Pancreas (tissue), 10 donors: ENCODE measurements at regions of chr5 and their contacts with region 1.

Region 1: GRCh38 chr5:38809388-38810359 is 36.1 kb upstream of the OSMR start:
- DNase-seq: peak; percentile 49 to 82 (median 72)
- ATAC-seq: peak; percentile 84 to 98 (median 98)
- H3K4me3 ChIP-seq: no peak overlapping the region
- H3K27ac ChIP-seq: no peak overlapping the region
- H3K4me1 ChIP-seq: no peaks in the 10 kb centered on the region
- H3K27me3 ChIP-seq: no peaks in the 10 kb centered on the region
- CTCF ChIP-seq: peak; percentile 37 to 75 (median 64)

Region 2: GRCh38 chr5:38433160-38433861 is 376.4 kb before region 1 on chr5:
- intact Hi-C with region 1: loop called in 1 of 3 experiments (anchors 10 kb)
- DNase-seq: no peak
- ATAC-seq: peak in 1 of 4 donors; percentile 50
- H3K4me3 ChIP-seq: no peak overlapping the region
- H3K27ac ChIP-seq: no peak overlapping the region
- H3K4me1 ChIP-seq: no peaks in the 10 kb centered on the region
- H3K27me3 ChIP-seq: peaks cover 0 to 3% (median 0%) of the 10 kb centered on the region in 4 donors
- CTCF ChIP-seq: no peak

Region 3: DNA sequence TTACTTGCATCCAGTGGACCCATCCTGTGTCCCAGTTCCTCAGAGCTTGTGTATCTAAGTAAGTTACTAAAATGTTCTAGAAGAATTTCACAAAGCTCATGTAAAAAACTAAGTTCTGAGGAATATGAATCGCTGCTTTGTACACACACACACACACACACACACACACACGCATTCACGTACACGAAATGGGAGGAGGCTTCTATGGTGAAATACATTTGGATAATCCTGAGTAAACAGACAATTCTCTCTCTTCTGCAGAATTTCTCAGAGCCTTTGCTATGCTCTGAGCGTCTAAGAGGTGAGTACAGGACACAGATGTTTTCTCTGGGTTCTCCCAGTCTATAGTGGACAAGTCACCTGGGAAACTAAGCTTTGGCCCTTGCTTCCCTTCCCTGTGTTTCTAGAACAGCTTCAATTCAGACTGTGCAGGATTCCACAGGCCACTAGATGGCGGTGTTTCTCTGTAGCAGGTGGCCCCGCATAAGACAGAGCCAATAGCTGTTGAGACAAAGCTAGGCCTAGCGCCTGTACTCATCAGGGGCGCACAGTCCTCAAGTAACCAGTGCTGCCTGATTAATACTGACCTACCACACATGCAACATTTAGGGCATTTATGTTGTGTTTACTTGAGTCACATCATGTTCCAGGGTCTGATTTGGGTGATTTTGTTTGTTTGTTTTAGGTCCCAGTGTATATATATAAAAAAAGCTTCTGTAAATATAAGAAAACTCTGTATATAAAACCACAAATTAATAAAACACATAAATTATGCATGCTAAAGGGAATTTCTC is 368.0 kb before region 1 on chr5:
- intact Hi-C with region 1: loop called (anchors 5 to 10 kb)
- DNase-seq: peak; percentile 76 to 91 (median 86)
- ATAC-seq: peak; percentile 99 to 100 (median 99)
- H3K4me3 ChIP-seq: no peak overlapping the region
- H3K27ac ChIP-seq: no peak overlapping the region
- H3K4me1 ChIP-seq: no peaks in the 10 kb centered on the region
- H3K27me3 ChIP-seq: no peaks in the 10 kb centered on the region
- CTCF ChIP-seq: peak; percentile 81 to 96 (median 90)

Region 4: DNA sequence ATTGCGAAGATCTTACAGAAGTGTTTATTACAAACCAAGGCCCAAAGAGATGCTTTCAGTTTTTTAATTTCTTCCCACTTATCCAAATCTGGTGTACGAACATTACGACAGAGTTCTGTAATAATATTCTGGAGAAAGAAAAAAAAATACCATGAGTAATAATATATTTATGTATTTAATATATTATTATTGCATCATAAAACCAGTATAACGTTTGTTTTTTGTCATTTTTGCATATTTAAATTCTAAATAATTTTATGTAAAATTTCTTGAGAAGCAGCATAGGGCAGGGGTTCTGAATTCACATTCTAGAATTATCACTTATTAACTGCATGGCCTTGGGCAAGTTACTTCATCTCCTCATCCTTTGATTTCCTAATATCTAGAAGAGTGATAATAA is 143.8 kb after region 1 on chr5:
- intact Hi-C with region 1: no loop called
- DNase-seq: no peak
- ATAC-seq: no peak
- H3K4me3 ChIP-seq: no peak overlapping the region
- H3K27ac ChIP-seq: no peak overlapping the region
- H3K4me1 ChIP-seq: no peaks in the 10 kb centered on the region
- H3K27me3 ChIP-seq: no peaks in the 10 kb centered on the region
- CTCF ChIP-seq: no peak

Region 5: GRCh38 chr5:38979535-38979934 is 169.9 kb after region 1 on chr5:
- intact Hi-C with region 1: no loop called
- DNase-seq: no peak
- ATAC-seq: no peak
- H3K4me3 ChIP-seq: no peak overlapping the region
- H3K27ac ChIP-seq: no peak overlapping the region
- H3K4me1 ChIP-seq: no peaks in the 10 kb centered on the region
- H3K27me3 ChIP-seq: no peaks in the 10 kb centered on the region
- CTCF ChIP-seq: no peak

Region 6: DNA sequence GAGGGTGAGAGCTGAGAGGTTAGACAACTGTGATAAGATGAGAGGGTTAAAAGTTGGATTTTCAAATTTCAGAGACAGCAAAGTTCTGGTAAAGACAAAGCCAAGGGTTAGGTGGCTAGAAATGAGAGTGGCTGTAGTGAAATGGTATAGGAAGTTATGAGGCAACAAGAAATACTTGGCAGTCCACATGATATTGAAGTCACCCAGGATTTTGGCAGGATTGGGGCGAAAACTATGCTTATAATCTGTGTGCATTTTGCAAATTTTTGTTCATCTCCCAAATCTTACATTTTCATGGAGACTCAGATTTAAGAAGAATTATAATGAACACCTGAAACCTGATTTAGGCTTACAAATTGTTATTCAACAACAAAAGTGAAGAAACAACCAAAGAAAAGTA is 519.1 kb after region 1 on chr5:
- intact Hi-C with region 1: no loop called
- DNase-seq: no peak
- ATAC-seq: no peak
- H3K4me3 ChIP-seq: no peak overlapping the region
- H3K27ac ChIP-seq: no peak overlapping the region
- H3K4me1 ChIP-seq: no peaks in the 10 kb centered on the region
- H3K27me3 ChIP-seq: no peaks in the 10 kb centered on the region
- CTCF ChIP-seq: no peak